Posterior cingulate gyrus (tissue), 11 donors: ENCODE measurements at regions of chr7 and their contacts with region 1.

Region 1: GRCh38 chr7:74401137-74401859 is 52.4 kb upstream of the GTF2IRD1 start:
- DNase-seq: peak; percentile 40 to 95 (median 80)

Region 2: DNA sequence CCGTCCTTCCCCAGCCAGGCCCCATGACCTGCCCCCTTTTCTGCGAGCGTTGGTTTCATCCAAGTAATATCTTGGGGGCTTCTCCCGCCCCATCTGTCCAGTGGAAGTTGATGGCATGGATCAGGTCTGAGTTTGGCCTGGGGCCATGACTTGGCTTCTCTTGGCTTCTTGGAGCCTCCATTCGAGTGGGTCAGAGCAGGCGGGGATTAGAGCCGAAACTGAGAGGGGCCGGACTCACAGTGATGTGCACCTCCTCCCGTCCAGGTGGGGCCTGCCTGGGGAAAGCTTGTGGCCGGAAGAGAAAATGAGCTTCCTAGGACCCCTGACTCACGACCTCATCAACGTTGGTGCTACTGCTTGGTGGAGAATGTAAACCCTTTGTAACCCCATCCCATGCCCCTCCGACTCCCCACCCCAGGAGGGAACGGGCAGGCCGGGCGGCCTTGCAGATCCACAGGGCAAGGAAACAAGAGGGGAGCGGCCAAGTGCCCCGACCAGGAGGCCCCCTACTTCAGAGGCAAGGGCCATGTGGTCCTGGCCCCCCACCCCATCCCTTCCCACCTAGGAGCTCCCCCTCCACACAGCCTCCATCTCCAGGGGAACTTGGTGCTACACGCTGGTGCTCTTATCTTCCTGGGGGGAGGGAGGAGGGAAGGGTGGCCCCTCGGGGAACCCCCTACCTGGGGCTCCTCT is 332.8 kb before region 1 on chr7:
- intact Hi-C with region 1: loop called (anchors 5 kb)
- DNase-seq: peak in 2 of 10 donors; percentile 74 to 75

Region 3: DNA sequence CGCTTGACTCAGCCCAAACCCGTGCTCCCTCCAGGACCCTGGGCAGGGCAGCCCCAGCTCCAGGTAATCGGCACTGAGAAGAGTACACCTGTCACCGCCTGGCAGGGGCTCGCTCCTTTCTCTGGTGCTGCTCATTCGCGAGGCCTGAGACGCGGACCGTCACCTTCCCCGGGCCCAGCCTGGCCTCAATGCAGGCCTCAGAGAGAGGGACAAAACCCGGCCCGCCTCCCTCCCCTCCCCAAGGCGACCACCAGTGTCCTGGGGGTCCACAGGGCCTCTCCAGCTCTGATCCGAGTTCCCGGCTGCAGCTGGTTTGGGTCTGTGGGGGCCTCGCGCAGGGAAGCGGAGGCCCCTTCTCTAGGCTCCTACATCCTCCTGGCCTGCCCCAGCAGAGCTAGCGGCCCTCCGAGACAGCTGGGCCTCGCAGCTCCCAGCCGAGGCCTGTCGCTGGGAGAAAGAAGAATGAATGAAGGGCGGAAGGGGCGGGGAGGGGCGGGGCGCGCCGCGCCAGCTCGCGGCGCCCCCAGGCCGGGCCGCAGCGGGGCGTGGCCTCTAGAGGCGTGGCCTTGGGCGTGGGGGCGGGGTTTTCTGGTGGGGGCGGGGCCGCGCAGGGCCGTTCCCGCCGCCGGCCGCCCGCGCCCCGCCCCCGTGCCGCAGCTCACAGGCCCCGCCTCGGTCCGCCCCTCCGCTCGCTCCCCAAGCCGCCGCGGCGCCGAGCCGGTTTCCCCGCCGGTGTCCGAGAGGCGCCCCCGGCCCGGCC is 318.0 kb before region 1 on chr7 and contains the start of gene LIMK1:
- intact Hi-C with region 1: no loop called
- DNase-seq: peak; percentile 58 to 97 (median 78)

Region 4: DNA sequence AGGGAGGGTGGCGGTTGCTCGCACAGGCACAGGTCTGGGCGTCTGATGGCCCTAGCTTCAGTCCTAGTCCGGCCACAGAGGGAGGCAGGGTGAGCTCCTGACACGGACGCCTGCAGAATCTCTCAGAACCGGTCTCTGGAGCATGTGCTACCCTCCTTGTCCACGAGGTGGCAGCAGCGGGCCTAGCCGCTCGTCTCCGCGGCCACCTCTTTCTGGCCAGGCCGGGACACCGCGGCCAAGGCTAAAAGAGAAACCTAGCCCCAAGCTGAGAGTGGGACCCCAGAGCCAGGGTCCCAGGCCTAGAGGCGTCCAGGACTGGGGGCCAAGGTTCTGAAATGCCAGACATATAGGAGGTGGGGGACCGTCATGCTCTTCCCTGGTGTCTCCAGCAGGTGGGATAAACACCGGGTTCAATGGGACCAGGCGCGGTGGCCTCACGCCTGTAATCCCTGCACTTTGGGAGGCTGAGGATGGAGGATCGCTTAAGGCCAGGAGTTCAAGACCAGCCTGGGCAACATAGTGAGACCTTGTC is 194.6 kb before region 1 on chr7:
- intact Hi-C with region 1: loop called (anchors 1 kb)
- DNase-seq: peak; percentile 74 to 98 (median 92)

Region 5: GRCh38 chr7:74306730-74307469 is 94.4 kb before region 1 on chr7:
- intact Hi-C with region 1: no loop called
- DNase-seq: peak; percentile 39 to 93 (median 60)

Region 6: DNA sequence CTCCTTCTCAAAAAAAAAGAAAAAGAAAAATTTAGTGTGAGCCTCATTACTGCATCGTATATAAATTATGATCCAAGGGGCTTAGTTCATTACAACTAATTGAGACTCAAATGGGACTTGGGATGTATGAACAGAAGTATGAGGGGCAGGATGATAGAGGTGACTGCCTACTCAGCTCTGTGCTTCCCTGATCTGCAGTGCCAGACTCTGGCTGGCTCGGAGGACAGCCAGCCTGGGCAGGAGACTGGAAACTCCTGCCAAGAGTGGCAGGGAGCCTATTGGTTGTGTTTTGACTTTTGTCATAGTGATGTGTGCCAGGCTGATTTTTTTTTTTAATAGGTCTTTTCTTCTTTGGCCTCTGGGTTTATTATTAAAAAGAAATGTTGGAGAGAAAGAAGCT is 21.4 kb before region 1 on chr7:
- intact Hi-C with region 1: no loop called
- DNase-seq: peak; percentile 53 to 96 (median 68)

Region 7: DNA sequence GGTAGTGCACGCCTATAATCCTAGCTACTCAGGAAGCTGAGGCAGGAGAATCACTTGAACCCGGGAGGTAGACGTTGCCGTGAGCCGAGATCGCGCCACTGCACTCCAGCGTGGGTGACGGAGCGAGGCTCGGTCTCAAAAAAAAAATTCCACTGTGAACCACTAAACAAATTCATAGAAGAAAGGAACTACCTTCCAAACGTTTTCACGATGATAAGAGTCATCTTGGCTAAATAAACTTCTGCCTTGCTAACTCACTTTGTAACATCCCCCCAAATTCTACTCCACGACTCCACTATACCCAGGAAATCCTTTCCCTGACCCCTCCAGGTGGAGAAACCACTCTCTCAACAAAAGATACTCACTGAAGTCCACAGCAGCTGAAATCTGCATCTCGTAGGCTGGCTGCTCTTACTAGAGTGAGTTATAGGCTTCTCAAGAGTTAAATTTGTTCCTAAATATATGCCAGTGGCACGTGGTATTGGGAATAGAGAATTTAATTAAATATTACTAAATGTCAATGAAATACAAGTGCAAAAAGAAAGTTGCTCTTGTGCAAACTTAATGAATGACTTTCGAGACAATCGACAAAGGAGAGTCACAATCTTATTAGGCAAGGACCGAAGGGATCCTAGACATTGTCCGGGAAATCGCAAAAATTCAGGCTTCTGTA is 254.6 kb after region 1 on chr7:
- intact Hi-C with region 1: no loop called
- DNase-seq: peak in 1 of 10 donors; percentile 48